ENCODE measurements at regions of chr2 and their contacts with region 1.

Region 1: GRCh38 chr2:233124421-233125080 is 64.4 kb downstream of the INPP5D start:
- DNase-seq: peak; percentile 93
- ATAC-seq: peak; percentile 98
- H3K4me3 ChIP-seq: peak overlapping the region in 1 of 5 experiments; percentile 24
- H3K4me3 Mint-ChIP-seq: peak overlapping the region; percentile 82
- H3K27ac ChIP-seq: peak overlapping the region; percentile 80 to 97
- H3K27ac Mint-ChIP-seq: peak overlapping the region; percentile 95
- H3K4me1 ChIP-seq: peaks cover 35 to 50% of the 10 kb centered on the region in 2 donors
- H3K4me1 Mint-ChIP-seq: peaks cover 50% of the 10 kb centered on the region
- H3K27me3 ChIP-seq: no peaks in the 10 kb centered on the region
- H3K27me3 Mint-ChIP-seq: no peaks in the 10 kb centered on the region
- CTCF ChIP-seq: no peak

Region 2: GRCh38 chr2:233084488-233084887 is 40.1 kb before region 1 on chr2:
- CTCF ChIA-PET with region 1: interaction called, 4 read pairs
- POLR2A ChIA-PET with region 1: interaction called, 20 read pairs
- intact Hi-C with region 1: loop called (anchors 5 kb)
- DNase-seq: peak; percentile 53
- ATAC-seq: peak; percentile 19
- H3K4me3 ChIP-seq: peak overlapping the region; percentile 2 to 48 (median 17)
- H3K4me3 Mint-ChIP-seq: peak overlapping the region; percentile 78
- H3K27ac ChIP-seq: peak overlapping the region; percentile 88
- H3K27ac Mint-ChIP-seq: peak overlapping the region; percentile 94
- H3K4me1 ChIP-seq: peaks cover 91 to 100% of the 10 kb centered on the region in 2 donors
- H3K4me1 Mint-ChIP-seq: peaks cover 95% of the 10 kb centered on the region
- H3K27me3 ChIP-seq: no peaks in the 10 kb centered on the region
- H3K27me3 Mint-ChIP-seq: no peaks in the 10 kb centered on the region
- CTCF ChIP-seq: no peak

Region 3: DNA sequence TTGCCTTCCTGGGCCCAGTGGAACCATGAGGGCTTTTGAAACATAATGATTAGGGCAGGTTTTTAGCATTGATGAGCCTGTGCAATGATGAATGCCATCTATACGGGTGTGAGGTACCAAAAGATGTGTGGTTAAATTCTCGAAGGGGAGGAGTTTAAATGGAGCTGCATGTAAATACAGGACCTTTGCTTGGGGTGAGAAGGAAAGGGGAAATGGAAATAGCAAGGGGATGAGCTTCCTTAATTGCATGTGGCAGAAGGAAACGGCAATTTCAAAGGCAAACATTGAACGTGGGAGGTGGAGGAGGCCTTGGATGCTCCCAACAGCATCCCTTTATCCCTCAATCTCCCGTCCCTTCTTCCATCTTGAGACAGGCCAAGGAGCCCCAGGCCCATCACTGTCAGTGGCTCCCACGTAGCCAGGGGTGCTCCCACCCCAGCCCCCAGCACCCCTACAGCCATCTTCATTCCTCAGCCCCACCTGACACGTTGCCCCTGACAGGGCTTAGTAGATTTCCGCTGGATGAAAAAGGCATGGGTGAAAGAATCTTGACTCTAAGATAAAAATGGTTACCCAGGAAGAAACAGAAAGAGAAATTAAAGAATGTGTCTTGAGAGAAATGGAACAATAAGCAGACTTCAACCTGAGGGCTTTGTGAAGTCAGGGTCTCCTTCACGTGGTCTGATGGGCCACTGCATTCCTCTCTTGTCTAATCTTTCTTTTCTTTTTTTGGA is 32.0 kb before region 1 on chr2:
- CTCF ChIA-PET with region 1: interaction called, 4 read pairs
- POLR2A ChIA-PET with region 1: interaction called, 3 read pairs
- intact Hi-C with region 1: loop called (anchors 2 kb)
- DNase-seq: peak; percentile 61
- ATAC-seq: peak; percentile 70
- H3K4me3 ChIP-seq: peak overlapping the region in 3 of 5 experiments; percentile 6 to 40 (median 25)
- H3K4me3 Mint-ChIP-seq: peak overlapping the region; percentile 76
- H3K27ac ChIP-seq: peak overlapping the region; percentile 69 to 87
- H3K27ac Mint-ChIP-seq: peak overlapping the region; percentile 89
- H3K4me1 ChIP-seq: peaks cover 67 to 86% of the 10 kb centered on the region in 2 donors
- H3K4me1 Mint-ChIP-seq: peaks cover 81% of the 10 kb centered on the region
- H3K27me3 ChIP-seq: no peaks in the 10 kb centered on the region
- H3K27me3 Mint-ChIP-seq: no peaks in the 10 kb centered on the region
- CTCF ChIP-seq: no peak

Region 4: GRCh38 chr2:233100192-233100998 is 24.2 kb before region 1 on chr2:
- CTCF ChIA-PET with region 1: interaction called, 16 read pairs
- POLR2A ChIA-PET with region 1: interaction called, 39 read pairs
- intact Hi-C with region 1: loop called (anchors 1 kb)
- DNase-seq: peak; percentile 93
- ATAC-seq: peak; percentile 86
- H3K4me3 ChIP-seq: peak overlapping the region in 4 of 5 experiments; percentile 18 to 55 (median 40)
- H3K4me3 Mint-ChIP-seq: peak overlapping the region; percentile 83
- H3K27ac ChIP-seq: peak overlapping the region; percentile 96 to 98
- H3K27ac Mint-ChIP-seq: peak overlapping the region; percentile 97
- H3K4me1 ChIP-seq: peaks cover 79 to 83% of the 10 kb centered on the region in 2 donors
- H3K4me1 Mint-ChIP-seq: peaks cover 80% of the 10 kb centered on the region
- H3K27me3 ChIP-seq: no peaks in the 10 kb centered on the region
- H3K27me3 Mint-ChIP-seq: no peaks in the 10 kb centered on the region
- CTCF ChIP-seq: no peak

Region 5: GRCh38 chr2:233108611-233109490 is 15.7 kb before region 1 on chr2:
- CTCF ChIA-PET with region 1: interaction called, 3 read pairs
- POLR2A ChIA-PET with region 1: interaction called, 6 read pairs
- intact Hi-C with region 1: loop called (anchors 1 kb)
- DNase-seq: peak; percentile 42
- ATAC-seq: peak; percentile 63
- H3K4me3 ChIP-seq: no peak overlapping the region
- H3K4me3 Mint-ChIP-seq: peak overlapping the region; percentile 82
- H3K27ac ChIP-seq: peak overlapping the region in 1 of 2 donors; percentile 73
- H3K27ac Mint-ChIP-seq: peak overlapping the region; percentile 89
- H3K4me1 ChIP-seq: peaks cover 68 to 78% of the 10 kb centered on the region in 2 donors
- H3K4me1 Mint-ChIP-seq: peaks cover 80% of the 10 kb centered on the region
- H3K27me3 ChIP-seq: no peaks in the 10 kb centered on the region
- H3K27me3 Mint-ChIP-seq: no peaks in the 10 kb centered on the region
- CTCF ChIP-seq: no peak